ENCODE measurements at regions of chr10 and their contacts with region 1.

Region 1: DNA sequence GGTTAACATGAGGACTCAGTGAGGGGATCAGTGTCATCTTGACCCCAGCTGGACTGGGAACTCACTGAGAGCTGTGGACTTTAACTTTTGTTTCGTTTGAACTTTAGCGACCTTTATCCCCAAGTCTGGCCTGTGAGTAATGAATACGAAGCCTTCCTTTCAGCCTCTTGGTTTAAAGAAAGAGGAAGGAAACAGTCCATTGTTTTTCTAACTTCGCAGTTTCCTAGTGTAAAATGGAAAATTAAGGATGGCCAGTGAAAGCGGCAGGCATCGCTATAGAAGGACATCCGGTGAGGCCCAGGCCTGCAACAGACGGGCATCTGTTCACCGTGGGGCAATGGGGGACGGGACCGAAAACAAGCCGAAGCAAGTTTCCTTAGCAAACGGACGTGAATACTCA is 44.1 kb upstream of the ADO start:
- DNase-seq: no peak
- ATAC-seq: no peak
- H3K4me3 Mint-ChIP-seq: no peak overlapping the region
- H3K27ac Mint-ChIP-seq: no peak overlapping the region
- H3K4me1 Mint-ChIP-seq: peaks cover 29% of the 10 kb centered on the region
- H3K27me3 Mint-ChIP-seq: no peaks in the 10 kb centered on the region
- CTCF ChIP-seq: no peak

Region 2: GRCh38 chr10:62748386-62748785 is 12.0 kb before region 1 on chr10:
- CTCF ChIA-PET with region 1: interaction called, 12 read pairs
- POLR2A ChIA-PET with region 1: interaction called, 7 read pairs
- intact Hi-C with region 1: no loop called
- DNase-seq: no peak
- ATAC-seq: peak; percentile 24
- H3K4me3 Mint-ChIP-seq: no peak overlapping the region
- H3K27ac Mint-ChIP-seq: peak overlapping the region; percentile 88
- H3K4me1 Mint-ChIP-seq: peaks cover 22% of the 10 kb centered on the region
- H3K27me3 Mint-ChIP-seq: no peaks in the 10 kb centered on the region
- CTCF ChIP-seq: no peak

Measured in activated CD8-positive, alpha-beta T cell treated with anti-CD3 and anti-CD28 coated beads for 36 hours (primary cell).